OCI-LY7 (cell line): ENCODE measurements at regions of chr18 and their contacts with region 1.

Region 1: DNA sequence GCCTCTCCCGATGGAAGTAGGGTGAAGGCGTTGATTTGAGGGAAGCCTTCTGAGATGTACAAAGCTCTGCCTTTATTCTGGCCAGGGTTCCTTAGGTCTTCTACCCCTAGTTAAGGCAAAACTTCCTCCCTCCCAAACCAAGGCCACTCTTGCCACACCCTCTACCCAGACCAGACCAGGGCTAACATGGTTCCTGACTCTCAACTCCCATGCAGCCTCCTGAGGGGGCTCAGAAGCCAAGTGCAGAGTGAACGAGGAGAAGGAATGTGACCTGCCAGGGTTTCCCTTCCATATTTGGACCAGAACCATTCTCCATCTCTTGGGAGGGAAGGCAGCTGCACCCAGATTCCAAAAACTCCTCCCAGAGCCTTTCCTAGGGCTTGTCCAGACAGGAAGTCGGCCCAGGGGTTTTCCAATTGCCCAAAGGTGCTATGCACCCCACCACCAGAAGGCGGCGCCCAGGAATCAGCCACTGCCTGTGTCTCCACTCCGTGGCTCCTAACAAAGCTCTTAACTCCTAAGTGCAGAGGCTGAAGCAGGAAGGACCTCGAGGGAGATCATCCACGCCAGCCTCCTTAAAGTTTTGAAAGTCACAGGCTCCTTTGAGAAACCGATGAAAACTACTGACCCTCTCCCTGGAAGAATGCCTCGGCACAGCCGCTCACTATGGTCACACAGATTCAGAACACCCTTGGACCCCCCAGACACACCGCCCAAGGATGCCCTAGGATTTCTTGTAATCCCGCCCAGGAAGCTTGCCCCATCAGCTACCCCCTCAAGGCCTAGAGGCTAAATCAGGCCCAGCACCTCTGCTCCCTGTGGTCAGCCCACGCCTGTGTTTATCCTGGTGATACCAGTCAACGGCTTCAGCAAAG is 157.8 kb downstream of the SMAD2 start:
- DNase-seq: peak; percentile 35
- H3K4me3 ChIP-seq: no peak overlapping the region
- H3K27ac ChIP-seq: no peak overlapping the region
- H3K4me1 ChIP-seq: no peaks in the 10 kb centered on the region
- CTCF ChIP-seq: peak; percentile 79

Region 2: GRCh38 chr18:47832348-47832747 is 59.7 kb after region 1 on chr18:
- CTCF ChIA-PET with region 1: no interaction called
- POLR2A ChIA-PET with region 1: no interaction called
- intact Hi-C with region 1: no loop called
- DNase-seq: no peak
- H3K4me3 ChIP-seq: no peak overlapping the region
- H3K27ac ChIP-seq: no peak overlapping the region
- H3K4me1 ChIP-seq: no peaks in the 10 kb centered on the region
- CTCF ChIP-seq: no peak

Region 3: DNA sequence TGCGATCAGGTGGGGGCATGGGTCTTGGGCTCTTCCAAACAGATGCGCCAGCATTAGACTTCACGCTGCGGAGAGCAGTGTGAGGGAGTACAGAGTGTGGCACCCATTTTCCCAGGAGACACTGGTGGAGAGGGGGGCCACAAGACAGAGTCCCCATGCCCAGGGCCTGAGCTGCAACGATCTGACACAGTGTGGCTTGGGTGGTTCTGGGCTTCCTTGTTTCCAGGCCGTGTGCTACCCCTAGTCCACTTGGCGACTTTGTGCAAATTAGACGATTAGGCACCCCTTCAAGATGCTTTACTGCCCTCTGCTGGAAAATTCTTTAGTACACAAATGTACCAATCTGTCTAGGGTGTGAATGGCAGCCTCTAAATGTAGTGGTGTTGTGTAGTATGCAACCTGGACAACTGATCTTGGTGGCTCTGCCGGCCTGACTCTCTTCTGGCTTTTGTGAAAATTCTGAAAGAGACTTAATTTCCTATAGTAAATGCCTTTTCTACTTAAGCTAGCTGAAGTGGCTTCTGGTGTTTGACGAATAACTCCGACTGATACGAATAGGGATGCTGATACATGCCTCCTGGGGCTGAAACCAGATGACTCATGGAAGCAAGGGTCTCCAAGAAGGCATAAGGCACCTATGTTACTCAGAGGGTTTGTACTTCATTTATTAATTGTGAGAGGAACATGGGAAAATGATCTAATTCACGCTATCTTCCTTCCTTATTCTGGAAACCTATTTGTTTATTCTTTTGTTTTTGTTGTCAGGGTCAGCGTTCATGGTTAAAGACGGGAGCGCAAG is 250.1 kb after region 1 on chr18:
- CTCF ChIA-PET with region 1: no interaction called
- POLR2A ChIA-PET with region 1: no interaction called
- intact Hi-C with region 1: loop called (anchors 1 kb)
- DNase-seq: peak; percentile 52
- H3K4me3 ChIP-seq: no peak overlapping the region
- H3K27ac ChIP-seq: no peak overlapping the region
- H3K4me1 ChIP-seq: no peaks in the 10 kb centered on the region
- CTCF ChIP-seq: peak; percentile 66